Naive thymus-derived CD8-positive, alpha-beta T cell (primary cell): ENCODE measurements at regions of chr18 and their contacts with region 1.

Region 1: DNA sequence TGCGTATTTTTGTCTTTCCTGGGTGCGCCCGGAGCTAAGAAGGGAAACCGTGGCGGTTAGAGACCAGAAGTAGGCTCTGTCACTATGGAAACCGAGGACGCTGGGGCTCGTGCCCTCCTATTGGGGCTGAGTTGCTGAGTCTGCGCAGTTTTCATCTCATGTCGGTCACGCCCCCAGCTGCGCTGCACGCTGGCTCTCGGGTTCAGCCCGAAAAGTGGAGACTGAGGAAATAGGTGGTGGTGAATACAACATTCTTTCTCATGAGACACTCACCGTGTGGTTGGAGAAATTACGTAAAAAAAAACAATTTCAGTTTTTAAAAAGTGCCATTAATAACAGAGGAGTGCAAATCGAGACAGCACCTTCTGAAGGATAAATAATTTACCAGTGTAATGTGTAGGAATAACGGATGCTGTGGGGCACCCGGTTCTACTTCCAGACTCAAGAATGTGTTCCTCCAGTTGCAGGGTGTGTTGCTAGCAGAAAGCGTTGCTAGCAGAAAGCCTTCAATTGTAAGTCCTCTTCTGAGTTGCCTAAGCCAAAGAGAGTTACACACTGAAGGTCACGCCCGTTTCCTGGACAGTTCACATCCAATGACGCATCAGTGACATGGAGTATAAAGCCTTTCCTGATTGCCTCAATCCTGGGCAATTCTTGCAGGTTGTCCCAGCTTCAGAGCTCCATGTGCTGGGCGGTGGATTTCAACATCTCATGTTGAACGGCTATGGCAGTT is 20.4 kb upstream of the CXXC1 start:
- DNase-seq: peak; percentile 76 to 96 (median 89)
- ATAC-seq: peak; percentile 99
- H3K4me3 Mint-ChIP-seq: peak overlapping the region; percentile 90 to 97 (median 93)
- H3K27ac Mint-ChIP-seq: peak overlapping the region; percentile 59 to 94 (median 90)
- H3K4me1 Mint-ChIP-seq: peaks cover 7 to 39% (median 16%) of the 10 kb centered on the region in 4 donors
- H3K27me3 Mint-ChIP-seq: peaks cover under 1 to 14% (median 7%) of the 10 kb centered on the region in 5 donors

Region 2: GRCh38 chr18:50281295-50281971 is 26.5 kb before region 1 on chr18 and contains the start of gene MBD1:
- POLR2A ChIA-PET with region 1: interaction called, 22 read pairs
- DNase-seq: peak; percentile 93 to 99 (median 96)
- ATAC-seq: peak; percentile 91 to 93
- H3K4me3 Mint-ChIP-seq: peak within 1 kb of the TSS; percentile 94 to 99 (median 97)
- H3K27ac Mint-ChIP-seq: peak within 1 kb of the TSS; percentile 94 to 99 (median 98)
- H3K4me1 Mint-ChIP-seq: peaks cover 33 to 60% (median 45%) of the 10 kb centered on the region in 4 donors
- H3K27me3 Mint-ChIP-seq: no peaks in the 10 kb centered on the region
- polyA plus RNA-seq, gene MBD1: 22.5 to 39.9 (median 25.2) TPM

Region 3: DNA sequence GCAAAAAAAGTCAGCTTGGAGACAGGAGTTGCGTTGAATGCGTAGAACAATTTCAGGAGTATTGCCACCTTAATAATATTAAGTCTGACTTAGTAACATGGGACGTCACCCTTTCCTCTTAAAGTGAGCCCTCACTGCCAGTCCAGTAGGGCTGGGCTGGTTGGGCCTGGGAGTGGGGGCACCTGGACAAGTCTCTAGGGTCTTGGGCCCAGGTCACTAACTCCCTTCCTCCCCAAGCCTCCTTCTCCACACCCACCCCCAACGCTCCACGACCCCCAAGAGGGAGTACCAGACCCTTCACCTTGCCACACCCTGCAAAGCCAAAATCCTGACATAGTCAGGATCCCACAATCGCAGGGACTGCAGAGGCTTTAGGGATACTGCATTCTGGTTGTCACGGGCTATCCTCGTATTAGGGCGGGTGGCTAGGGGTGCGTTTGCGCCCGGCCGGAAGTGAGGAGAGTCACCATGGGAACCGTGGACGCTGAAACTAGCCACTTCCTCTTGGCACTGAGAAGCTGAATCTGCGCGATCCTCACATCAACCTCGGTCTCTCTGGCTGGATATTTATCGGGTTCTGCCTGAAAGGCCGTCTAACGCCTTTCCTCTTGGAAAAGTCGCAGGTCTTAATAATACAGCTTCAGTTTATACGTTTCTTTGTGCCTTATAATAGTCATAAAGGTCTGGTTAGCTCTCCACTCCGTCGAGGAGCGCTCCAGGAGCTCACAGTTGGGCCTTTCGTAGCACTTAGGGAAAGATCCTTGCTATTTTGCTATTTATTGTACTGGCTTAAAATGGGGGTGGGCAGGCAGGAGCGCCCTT is 10.1 kb before region 1 on chr18:
- POLR2A ChIA-PET with region 1: interaction called, 13 read pairs
- DNase-seq: peak in 9 of 10 donors; percentile 41 to 85 (median 69)
- ATAC-seq: peak; percentile 96 to 97
- H3K4me3 Mint-ChIP-seq: peak overlapping the region; percentile 75 to 87 (median 83)
- H3K27ac Mint-ChIP-seq: peak overlapping the region in 6 of 10 donors; percentile 25 to 79 (median 51)
- H3K4me1 Mint-ChIP-seq: peaks cover 3 to 17% (median 12%) of the 10 kb centered on the region in 4 donors
- H3K27me3 Mint-ChIP-seq: peaks cover 1 to 22% (median 15%) of the 10 kb centered on the region in 5 donors

Region 4: GRCh38 chr18:50334546-50335152 is 26.7 kb after region 1 on chr18:
- POLR2A ChIA-PET with region 1: no interaction called
- DNase-seq: no peak
- ATAC-seq: no peak
- H3K4me3 Mint-ChIP-seq: peak overlapping the region in 1 of 10 donors; percentile 26
- H3K27ac Mint-ChIP-seq: no peak overlapping the region
- H3K4me1 Mint-ChIP-seq: peaks cover 0 to 50% (median 0%) of the 10 kb centered on the region in 4 donors
- H3K27me3 Mint-ChIP-seq: peaks cover 0 to 8% (median 5%) of the 10 kb centered on the region in 5 donors